ENCODE measurements at regions of chr10 and their contacts with region 1.

Region 1: GRCh38 chr10:68897336-68897741 is 3.8 kb upstream of the DDX50 start:
- DNase-seq: no peak
- ATAC-seq: no peak
- H3K4me3 ChIP-seq: no peak overlapping the region
- H3K27ac ChIP-seq: no peak overlapping the region
- H3K4me1 ChIP-seq: no peaks in the 10 kb centered on the region
- H3K27me3 ChIP-seq: no peaks in the 10 kb centered on the region

Region 2: DNA sequence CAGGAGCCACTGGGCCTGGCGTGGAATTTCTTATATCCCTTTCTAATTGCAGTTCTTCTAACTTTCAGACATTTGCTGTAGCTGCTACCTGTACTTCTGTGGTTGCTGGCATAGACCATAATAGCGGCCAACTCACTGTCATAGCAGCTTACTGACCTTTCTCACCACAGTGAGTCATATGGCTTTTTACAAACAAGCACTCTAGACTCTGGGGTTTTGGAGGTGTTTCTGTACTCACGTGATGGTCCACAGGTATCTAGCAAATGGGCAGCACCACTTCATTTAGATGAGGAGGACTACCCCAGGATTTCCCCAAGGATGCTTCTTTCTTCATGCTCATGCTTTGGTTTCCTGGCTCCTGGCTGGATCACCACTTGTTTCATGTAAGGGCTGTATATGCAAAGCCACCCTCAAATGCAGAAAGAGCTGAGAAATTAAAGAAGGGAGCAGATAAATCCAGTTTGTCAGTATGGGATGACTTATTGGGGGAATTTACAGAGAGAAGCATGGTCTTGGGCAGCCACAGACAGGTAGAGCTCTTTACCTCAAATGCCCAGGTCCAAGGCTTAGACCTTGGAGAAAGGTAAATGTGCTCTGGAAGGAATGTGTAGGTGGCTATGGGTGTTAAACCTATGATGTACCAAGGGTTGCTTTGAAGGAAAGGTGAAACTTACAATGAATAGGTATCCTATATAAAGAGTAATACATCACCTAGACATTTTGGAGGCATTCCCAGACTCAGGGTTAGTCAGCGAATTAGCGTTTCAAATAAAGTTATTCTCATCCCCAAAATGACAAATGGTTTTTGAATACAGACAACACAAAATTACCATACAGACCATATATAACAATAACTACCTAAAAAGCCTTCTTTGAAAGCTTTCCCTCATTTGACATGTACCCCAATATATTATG is 354.1 kb before region 1 on chr10:
- intact Hi-C with region 1: loop called in 1 of 4 experiments (anchors 10 kb)
- DNase-seq: no peak
- ATAC-seq: no peak
- H3K4me3 ChIP-seq: no peak overlapping the region
- H3K27ac ChIP-seq: no peak overlapping the region
- H3K4me1 ChIP-seq: no peaks in the 10 kb centered on the region
- H3K27me3 ChIP-seq: no peaks in the 10 kb centered on the region

Region 3: GRCh38 chr10:68550747-68551411 is 346.5 kb before region 1 on chr10:
- intact Hi-C with region 1: loop called in 2 of 4 experiments (anchors 10 kb)
- DNase-seq: peak in 1 of 3 donors; percentile 22
- ATAC-seq: peak; percentile 64 to 77
- H3K4me3 ChIP-seq: no peak overlapping the region
- H3K27ac ChIP-seq: no peak overlapping the region
- H3K4me1 ChIP-seq: no peaks in the 10 kb centered on the region
- H3K27me3 ChIP-seq: no peaks in the 10 kb centered on the region

Region 4: DNA sequence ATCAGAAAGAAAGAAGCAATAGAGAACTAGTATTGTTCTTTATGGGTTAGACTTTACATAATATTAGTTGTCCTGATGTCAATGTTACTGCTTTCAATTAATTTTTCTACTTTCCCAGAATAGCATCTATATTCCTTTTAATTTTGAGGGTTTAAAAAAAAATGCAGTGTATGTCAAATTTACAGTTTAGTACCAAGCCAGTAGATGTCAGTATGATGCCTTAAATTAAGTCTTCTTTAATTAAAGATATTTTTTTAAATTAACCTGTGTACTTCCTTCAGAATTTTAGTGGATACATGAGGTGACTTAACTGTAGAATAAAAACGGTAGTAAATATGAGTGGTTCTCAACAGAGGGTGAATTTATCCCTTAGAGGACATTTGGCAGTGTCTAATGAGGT is 105.2 kb before region 1 on chr10:
- intact Hi-C with region 1: loop called in 2 of 4 experiments (anchors 10 kb)
- DNase-seq: no peak
- ATAC-seq: no peak
- H3K4me3 ChIP-seq: no peak overlapping the region
- H3K27ac ChIP-seq: no peak overlapping the region
- H3K4me1 ChIP-seq: no peaks in the 10 kb centered on the region
- H3K27me3 ChIP-seq: no peaks in the 10 kb centered on the region

Measured in right cardiac atrium (tissue), 5 donors.